Heart right ventricle (tissue), 16 donors: ENCODE measurements at regions of chr16 and their contacts with region 1.

Region 1: GRCh38 chr16:11977376-11978041 is 975 bp downstream of the SNX29 start:
- DNase-seq: peak in 1 of 2 donors; percentile 23
- ATAC-seq: peak in 7 of 8 donors; percentile 50 to 76 (median 62)
- H3K4me3 ChIP-seq: peak overlapping the region; percentile 77 to 100 (median 90)
- H3K27ac ChIP-seq: peak overlapping the region in 9 of 10 donors; percentile 83 to 94 (median 87)
- H3K4me1 ChIP-seq: peaks cover 6 to 26% (median 24%) of the 10 kb centered on the region in 9 donors
- H3K27me3 ChIP-seq: no peaks in the 10 kb centered on the region
- CTCF ChIP-seq: no peak

Region 2: GRCh38 chr16:11734025-11734652 is 243.4 kb before region 1 on chr16:
- intact Hi-C with region 1: no loop called
- DNase-seq: peak; percentile 17 to 39
- ATAC-seq: peak; percentile 20 to 83 (median 66)
- H3K4me3 ChIP-seq: no peak overlapping the region
- H3K27ac ChIP-seq: peak overlapping the region in 7 of 10 donors; percentile 12 to 61 (median 32)
- H3K4me1 ChIP-seq: peaks cover 5 to 76% (median 52%) of the 10 kb centered on the region in 9 donors
- H3K27me3 ChIP-seq: no peaks in the 10 kb centered on the region
- CTCF ChIP-seq: no peak

Region 3: DNA sequence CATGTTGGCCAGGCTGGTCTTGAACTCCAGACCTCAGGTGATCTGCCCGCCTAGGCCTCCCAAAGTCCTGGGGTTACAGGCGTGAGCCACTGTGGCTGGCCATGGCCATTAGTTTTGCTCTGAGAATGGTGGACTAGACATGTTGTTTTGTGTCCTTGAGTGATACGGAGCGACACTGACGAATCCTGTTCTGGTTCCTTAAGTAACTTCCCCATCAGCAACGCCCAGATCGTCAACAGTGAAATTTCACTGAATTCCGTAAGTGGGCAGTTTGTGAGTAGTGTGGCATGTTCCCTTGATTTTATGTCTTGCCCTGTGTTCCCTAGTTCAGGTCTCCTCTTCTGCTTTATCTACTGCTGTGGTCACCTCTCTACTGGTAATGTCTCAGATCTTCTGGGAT is 66.4 kb after region 1 on chr16:
- intact Hi-C with region 1: loop called in 1 of 10 experiments (anchors 5 kb)
- DNase-seq: no peak
- ATAC-seq: peak in 3 of 8 donors; percentile 34 to 42 (median 36)
- H3K4me3 ChIP-seq: no peak overlapping the region
- H3K27ac ChIP-seq: peak overlapping the region in 1 of 10 donors; percentile 71
- H3K4me1 ChIP-seq: peaks cover 0 to 7% (median 0%) of the 10 kb centered on the region in 9 donors
- H3K27me3 ChIP-seq: no peaks in the 10 kb centered on the region
- CTCF ChIP-seq: no peak

Region 4: GRCh38 chr16:12062343-12063005 is 85.0 kb after region 1 on chr16:
- intact Hi-C with region 1: loop called in 6 of 10 experiments (anchors 5 to 10 kb)
- DNase-seq: peak; percentile 58 to 65
- ATAC-seq: peak; percentile 77 to 96 (median 90)
- H3K4me3 ChIP-seq: no peak overlapping the region
- H3K27ac ChIP-seq: peak overlapping the region; percentile 9 to 78 (median 60)
- H3K4me1 ChIP-seq: peaks cover 2 to 29% (median 22%) of the 10 kb centered on the region in 9 donors
- H3K27me3 ChIP-seq: no peaks in the 10 kb centered on the region
- CTCF ChIP-seq: no peak